Aorta (tissue), 5 donors: ENCODE measurements at regions of chr5 and their contacts with region 1.

Region 1: DNA sequence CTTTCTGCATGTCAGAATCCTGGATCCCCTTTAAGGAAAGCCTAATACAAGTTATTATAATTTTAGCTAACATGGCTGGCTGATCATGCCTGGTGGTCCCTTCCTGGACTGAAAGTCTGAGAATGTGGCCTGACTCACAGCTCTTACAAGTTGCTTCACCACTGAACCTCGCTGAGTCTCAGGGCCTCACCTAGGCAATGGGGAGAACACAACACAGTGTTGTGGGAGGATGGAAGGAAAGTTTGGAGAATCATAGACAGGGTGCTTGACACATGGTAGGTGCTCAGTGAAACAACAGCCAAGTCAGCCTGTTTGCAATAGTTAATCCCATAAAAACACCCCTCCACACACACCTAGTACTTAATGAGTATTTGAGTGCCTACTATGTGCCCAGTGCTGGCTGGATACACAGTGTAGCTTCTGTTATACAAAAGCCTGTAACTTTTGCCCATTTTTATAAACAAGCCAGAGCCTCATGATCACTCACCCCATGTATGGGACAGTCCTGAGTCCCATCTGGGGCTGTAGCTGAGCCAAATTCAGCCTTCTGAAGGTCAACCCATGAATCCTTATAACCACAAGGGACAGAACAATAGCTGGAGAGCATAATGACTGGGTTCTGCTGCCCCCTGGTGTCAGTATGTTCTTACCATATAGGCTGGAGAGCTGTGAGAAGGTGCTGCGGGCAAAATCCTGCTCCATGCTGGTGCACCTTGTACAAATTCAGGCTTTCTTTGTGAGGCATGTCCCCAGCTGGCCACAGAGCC is 3.9 kb downstream of the ACSL6 start:
- DNase-seq: peak; percentile 81 to 82
- ATAC-seq: peak; percentile 62
- H3K4me3 ChIP-seq: no peak overlapping the region
- H3K27ac ChIP-seq: no peak overlapping the region
- H3K4me1 ChIP-seq: no peaks in the 10 kb centered on the region
- H3K27me3 ChIP-seq: no peaks in the 10 kb centered on the region

Region 2: GRCh38 chr5:131426011-131426410 is 581.6 kb before region 1 on chr5:
- intact Hi-C with region 1: loop called in 1 of 2 experiments (anchors 5 kb)
- DNase-seq: no peak
- ATAC-seq: no peak
- H3K4me3 ChIP-seq: no peak overlapping the region
- H3K27ac ChIP-seq: no peak overlapping the region
- H3K4me1 ChIP-seq: no peaks in the 10 kb centered on the region
- H3K27me3 ChIP-seq: no peaks in the 10 kb centered on the region

Region 3: DNA sequence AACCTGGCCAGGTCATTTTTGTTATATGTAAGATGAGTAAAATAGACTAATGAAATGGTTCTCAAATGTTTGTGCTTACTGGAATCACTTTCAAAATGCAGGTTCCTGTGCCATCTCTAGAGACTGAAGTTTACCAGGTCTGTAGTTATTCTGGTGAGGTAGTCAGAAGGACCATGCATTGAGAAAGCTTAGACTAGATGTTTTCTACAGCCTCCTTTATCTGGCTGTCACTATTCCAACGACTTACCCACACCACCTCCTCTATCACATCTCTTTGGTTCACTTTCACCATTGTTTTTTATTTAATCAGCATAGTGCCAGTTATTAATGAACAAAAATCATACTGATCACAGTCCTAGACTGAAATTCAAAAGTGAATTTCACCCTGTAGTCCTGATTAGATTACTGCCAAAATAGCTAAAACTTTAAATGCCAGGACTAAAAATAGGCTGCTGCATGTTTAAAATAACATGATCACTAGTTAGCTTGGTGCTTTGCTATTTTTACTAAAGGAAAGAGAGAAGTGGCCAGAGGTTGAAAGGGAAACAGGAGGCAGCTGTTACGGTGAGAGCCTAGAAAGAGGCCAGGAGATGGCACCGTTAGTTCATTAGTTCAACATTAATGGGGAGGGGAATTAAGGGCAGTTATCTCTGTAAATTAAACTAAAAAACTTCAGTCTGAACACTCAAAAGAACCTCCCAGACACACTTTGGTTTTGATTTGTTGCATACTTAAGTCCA is 196.9 kb before region 1 on chr5:
- intact Hi-C with region 1: loop called (anchors 5 to 10 kb)
- DNase-seq: no peak
- ATAC-seq: peak; percentile 50
- H3K4me3 ChIP-seq: peak overlapping the region; percentile 14 to 26
- H3K27ac ChIP-seq: peak overlapping the region in 1 of 2 donors; percentile 57
- H3K4me1 ChIP-seq: no peaks in the 10 kb centered on the region
- H3K27me3 ChIP-seq: no peaks in the 10 kb centered on the region